ENCODE measurements at regions of chr17 and their contacts with region 1.

Region 1: GRCh38 chr17:8109661-8110464 is 8.5 kb downstream of the ALOXE3 start:
- DNase-seq: no peak
- H3K4me3 ChIP-seq: peak overlapping the region; percentile 15; the same call in 1 of the 2 replicates
- H3K27ac ChIP-seq: no peak overlapping the region
- H3K27me3 ChIP-seq: peaks cover 45% of the 10 kb centered on the region
- CTCF ChIP-seq: peak; percentile 70

Region 2: DNA sequence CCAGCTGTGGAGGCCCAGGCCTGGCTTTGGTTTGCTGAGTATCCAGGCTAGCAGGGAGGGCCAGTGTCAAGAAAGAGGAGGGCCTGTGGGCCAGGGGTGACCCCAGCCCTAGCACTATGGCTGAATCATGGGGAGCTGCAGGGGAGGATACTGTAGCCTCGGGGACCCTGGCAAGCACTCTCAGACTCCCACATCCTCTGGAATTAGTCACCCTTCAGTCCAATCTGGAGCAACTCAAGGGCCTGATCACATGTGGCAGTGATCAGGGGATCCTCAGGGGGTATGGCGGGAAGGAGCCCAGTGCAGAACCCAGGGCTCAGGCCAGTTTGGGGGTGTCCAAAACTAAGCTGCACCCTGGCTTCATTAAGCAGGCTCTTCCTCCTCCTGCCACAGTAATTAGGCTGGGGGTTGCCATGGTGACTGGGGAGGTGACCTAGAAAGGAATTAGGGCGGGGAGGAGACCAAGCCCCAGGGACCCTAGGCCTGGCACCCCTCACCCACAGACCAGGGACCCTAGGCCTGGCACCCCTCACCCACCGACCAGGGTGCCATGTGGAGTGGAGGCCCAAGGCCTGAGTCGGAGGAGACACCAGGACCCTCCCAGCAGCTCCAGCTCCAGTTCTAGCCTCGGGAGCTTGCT is 696.4 kb before region 1 on chr17:
- CTCF ChIA-PET with region 1: no interaction called
- POLR2A ChIA-PET with region 1: no interaction called
- DNase-seq: no peak
- H3K4me3 ChIP-seq: no peak overlapping the region
- H3K27ac ChIP-seq: no peak overlapping the region
- H3K27me3 ChIP-seq: no peaks in the 10 kb centered on the region
- CTCF ChIP-seq: no peak

Region 3: GRCh38 chr17:8079291-8080207 is 30.3 kb before region 1 on chr17:
- CTCF ChIA-PET with region 1: interaction called, 12 read pairs
- POLR2A ChIA-PET with region 1: no interaction called
- DNase-seq: no peak
- H3K4me3 ChIP-seq: peak overlapping the region; percentile 53
- H3K27ac ChIP-seq: no peak overlapping the region
- H3K27me3 ChIP-seq: peaks cover 68% of the 10 kb centered on the region
- CTCF ChIP-seq: peak; percentile 82

Region 4: DNA sequence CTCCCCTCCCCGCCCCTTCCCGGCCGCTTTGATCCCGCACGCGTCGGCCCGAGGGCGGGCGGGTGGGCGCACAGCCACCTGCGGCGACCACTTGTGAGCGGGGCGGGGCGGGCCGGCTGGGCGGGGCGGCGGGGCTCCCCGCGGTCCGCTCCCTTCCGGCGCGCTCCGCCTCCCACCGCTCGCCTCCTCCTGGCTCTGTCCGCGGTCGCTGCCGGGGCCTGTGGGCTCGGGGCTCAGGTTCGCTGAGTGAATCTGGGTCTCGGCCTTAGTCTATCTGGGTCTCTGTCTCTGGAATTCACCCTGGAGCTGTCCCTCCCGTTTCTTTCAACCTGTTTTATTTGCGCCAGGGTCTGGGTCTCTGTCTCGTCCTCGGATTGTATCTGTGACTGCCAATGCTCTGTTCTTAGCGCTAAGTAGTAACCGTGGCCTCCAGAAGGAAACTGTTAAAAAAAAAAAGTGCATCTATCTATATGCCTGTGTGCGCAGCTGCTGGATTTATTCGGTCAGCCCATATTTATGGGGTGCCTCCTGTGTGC is 16.7 kb after region 1 on chr17:
- CTCF ChIA-PET with region 1: no interaction called
- POLR2A ChIA-PET with region 1: no interaction called
- DNase-seq: no peak
- H3K4me3 ChIP-seq: peak overlapping the region; percentile 73
- H3K27ac ChIP-seq: no peak overlapping the region
- H3K27me3 ChIP-seq: peaks cover 6% of the 10 kb centered on the region
- CTCF ChIP-seq: no peak